ENCODE measurements at regions of chr19 and their contacts with region 1.

Region 1: GRCh38 chr19:11586331-11586730 is 8.9 kb upstream of the ACP5 start:
- H3K4me3 ChIP-seq: no peak overlapping the region
- H3K27ac ChIP-seq: no peak overlapping the region
- H3K4me1 ChIP-seq: no peaks in the 10 kb centered on the region
- CTCF ChIP-seq: no peak

Region 2: DNA sequence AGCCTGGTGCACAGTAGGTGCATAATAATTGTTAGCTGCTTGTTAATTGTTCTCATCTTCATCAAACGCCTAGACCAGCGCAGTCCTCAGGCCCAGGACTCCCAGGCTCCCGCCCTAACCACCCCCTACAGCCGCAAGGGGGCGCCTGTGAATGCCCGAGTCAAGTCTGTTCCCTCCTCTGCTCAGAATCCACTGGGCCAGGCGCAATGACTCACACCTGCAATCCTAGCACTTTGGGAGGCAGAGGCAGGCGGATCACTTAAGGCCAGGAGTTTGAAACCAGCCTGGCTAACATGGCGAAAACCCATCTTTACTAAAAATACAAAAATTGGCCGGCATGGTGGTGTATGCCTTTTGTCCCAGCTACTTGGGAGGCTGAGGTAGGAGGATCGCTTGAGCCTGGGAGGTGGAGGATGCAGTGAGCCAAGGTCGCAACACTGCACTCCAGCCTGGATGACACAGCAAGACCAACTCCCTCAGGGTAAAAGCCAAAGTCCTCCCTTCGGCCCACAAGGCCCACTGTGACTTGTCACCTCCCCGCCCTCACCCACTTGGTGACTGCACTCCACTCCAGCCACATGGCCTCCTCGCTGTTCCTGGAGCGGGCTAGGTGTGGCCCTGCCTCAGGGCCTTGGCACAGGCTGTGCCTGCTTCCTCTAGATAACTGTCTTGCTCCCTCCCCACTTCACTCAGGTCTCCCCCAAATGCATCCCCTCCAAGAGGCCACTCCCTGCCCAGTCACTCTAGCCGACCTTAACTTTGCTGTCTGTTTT is 89.8 kb before region 1 on chr19:
- CTCF ChIA-PET with region 1: interaction called, 10 read pairs
- POLR2A ChIA-PET with region 1: interaction called, 3 read pairs
- H3K4me3 ChIP-seq: no peak overlapping the region
- H3K27ac ChIP-seq: no peak overlapping the region
- H3K4me1 ChIP-seq: no peaks in the 10 kb centered on the region
- CTCF ChIP-seq: peak; percentile 38; the same call in 1 of the 2 replicates